Activated CD4-positive, alpha-beta T cell treated with anti-CD3 and anti-CD28 coated beads for 36 hours (primary cell): ENCODE measurements at regions of chr13 and their contacts with region 1.

Region 1: DNA sequence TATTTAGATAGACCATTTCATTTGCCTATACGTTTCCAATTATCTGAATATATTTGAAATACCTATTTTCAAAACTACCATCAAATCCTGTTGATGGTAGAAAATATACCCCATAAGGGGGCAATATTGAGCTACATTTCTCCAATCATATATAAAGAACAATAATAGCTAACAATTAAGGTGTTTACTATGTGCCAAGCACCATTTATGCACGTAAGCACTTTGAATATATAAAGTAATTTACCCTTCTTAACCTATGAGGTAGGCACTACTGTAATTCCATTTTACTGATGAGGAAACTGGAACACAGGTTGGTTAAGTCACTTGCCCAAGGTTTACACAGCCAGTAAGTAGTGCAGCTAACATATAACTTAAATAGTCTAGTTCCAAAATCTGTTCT is 79.2 kb downstream of the UBL3 start:
- DNase-seq: no peak
- ATAC-seq: no peak
- H3K4me3 Mint-ChIP-seq: no peak overlapping the region
- H3K27ac Mint-ChIP-seq: no peak overlapping the region
- H3K4me1 Mint-ChIP-seq: peaks cover 8% of the 10 kb centered on the region
- H3K27me3 Mint-ChIP-seq: no peaks in the 10 kb centered on the region

Region 2: DNA sequence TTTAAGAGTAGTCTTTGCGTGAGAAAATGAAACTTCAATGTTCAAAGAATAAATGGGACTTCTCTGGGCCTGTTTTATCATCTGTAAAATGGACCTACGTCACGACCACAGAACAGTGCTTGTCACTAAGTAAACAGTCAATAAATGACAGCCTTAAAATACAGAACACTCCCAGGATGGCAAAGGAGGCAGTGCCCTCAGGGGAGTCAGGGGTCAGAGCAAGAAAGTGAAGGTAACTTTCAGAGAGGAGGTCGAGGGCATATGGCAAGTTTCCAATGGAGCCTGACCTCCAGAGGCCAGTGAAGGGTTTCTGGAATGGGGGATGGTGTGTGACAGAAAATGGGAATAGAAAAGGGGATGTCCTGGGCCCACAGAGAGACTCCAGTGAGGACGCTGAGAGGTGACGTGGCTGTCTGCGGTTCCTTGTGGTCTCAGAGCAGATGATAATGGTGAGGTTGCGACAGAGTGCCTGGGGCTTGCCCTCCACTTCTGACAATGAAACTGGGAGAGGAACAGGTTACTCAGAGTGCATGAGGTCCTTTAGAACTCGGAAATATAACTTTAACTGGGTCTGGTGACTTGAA is 12.6 kb before region 1 on chr13:
- CTCF ChIA-PET with region 1: interaction called, 15 read pairs
- POLR2A ChIA-PET with region 1: no interaction called
- intact Hi-C with region 1: no loop called
- DNase-seq: peak; percentile 85
- ATAC-seq: peak; percentile 91
- H3K4me3 Mint-ChIP-seq: peak overlapping the region; percentile 22
- H3K27ac Mint-ChIP-seq: peak overlapping the region; percentile 1
- H3K4me1 Mint-ChIP-seq: peaks cover 29% of the 10 kb centered on the region
- H3K27me3 Mint-ChIP-seq: no peaks in the 10 kb centered on the region

Region 3: GRCh38 chr13:29923554-29924481 is 152.6 kb after region 1 on chr13:
- CTCF ChIA-PET with region 1: interaction called, 21 read pairs
- POLR2A ChIA-PET with region 1: no interaction called
- intact Hi-C with region 1: loop called (anchors 1 to 5 kb)
- DNase-seq: peak; percentile 88
- ATAC-seq: peak; percentile 97
- H3K4me3 Mint-ChIP-seq: no peak overlapping the region
- H3K27ac Mint-ChIP-seq: no peak overlapping the region
- H3K4me1 Mint-ChIP-seq: peaks cover 41% of the 10 kb centered on the region
- H3K27me3 Mint-ChIP-seq: no peaks in the 10 kb centered on the region